GM12878 (cell line): ENCODE measurements at regions of chr20 and their contacts with region 1.

Region 1: GRCh38 chr20:45095753-45096371 is 5.1 kb downstream of the KCNS1 start:
- DNase-seq: peak; percentile 27
- ATAC-seq: peak; percentile 82
- H3K4me3 ChIP-seq: no peak overlapping the region
- H3K27ac ChIP-seq: no peak overlapping the region
- H3K4me1 ChIP-seq: no peaks in the 10 kb centered on the region
- H3K27me3 ChIP-seq: peaks cover under 1 to 7% of the 10 kb centered on the region in 2 experiments; a peak in 3 of 4 replicates
- CTCF ChIP-seq: peak; percentile 69 to 86 (median 84)
- EP300 ChIP-seq: no peak
- POLR2A ChIP-seq: no peak
- RAD21 ChIP-seq: peak; percentile 86

Region 2: DNA sequence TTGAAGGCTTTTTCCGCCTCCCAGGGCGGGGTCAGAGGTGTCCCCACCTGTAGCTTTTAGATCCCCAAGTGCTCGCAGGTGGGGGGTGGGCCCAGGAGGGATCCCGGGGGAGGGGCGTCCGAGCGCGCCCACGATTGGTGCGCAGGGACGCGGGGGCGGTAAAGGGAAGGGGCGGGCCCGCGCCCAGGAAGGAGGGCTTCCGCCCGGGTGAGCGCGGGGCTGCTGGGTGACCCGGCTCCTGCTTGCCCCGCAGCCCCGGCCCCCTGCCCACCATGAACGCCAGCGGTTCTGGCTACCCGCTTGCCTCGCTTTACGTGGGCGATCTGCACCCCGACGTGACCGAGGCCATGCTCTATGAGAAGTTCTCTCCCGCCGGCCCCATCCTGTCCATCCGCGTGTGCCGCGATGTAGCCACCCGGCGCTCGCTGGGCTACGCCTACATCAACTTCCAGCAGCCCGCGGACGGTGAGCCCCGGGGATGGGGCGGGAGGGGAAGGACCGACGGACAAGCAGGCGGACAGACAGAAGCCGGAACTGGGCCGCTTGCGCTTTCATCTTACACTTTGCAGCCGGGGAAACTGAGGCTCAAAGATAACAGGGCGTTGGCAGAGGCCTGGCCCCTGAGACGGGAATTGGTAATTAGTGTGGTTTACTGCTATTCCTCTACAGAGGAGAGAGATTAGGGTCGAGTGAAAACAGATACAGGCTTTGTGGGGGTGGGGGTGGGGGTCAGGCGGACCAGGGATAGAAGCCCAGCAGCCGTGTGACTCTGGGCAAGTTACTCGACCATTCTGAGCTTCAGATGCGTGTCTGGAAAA is 185.8 kb before region 1 on chr20 and contains the start of gene PABPC1L:
- CTCF ChIA-PET with region 1: interaction called, 30 read pairs
- POLR2A ChIA-PET with region 1: no interaction called
- RAD21 ChIA-PET with region 1: interaction called, 4 read pairs
- SMC1A ChIA-PET with region 1: interaction called, 18 read pairs
- in situ Hi-C with region 1: no loop called
- intact Hi-C with region 1: loop called (anchors 5 kb)
- DNase-seq: peak; percentile 13
- ATAC-seq: peak; percentile 98
- H3K4me3 ChIP-seq: peak within 1 kb of the TSS; percentile 91
- H3K27ac ChIP-seq: no peak within 1 kb of the TSS; the same call in 1 of the 2 replicates
- H3K4me1 ChIP-seq: peaks cover 3% of the 10 kb centered on the region
- H3K27me3 ChIP-seq: no peaks in the 10 kb centered on the region
- CTCF ChIP-seq: no peak
- EP300 ChIP-seq: no peak
- POLR2A ChIP-seq: peak; percentile 85
- RAD21 ChIP-seq: no peak
- polyA plus RNA-seq, gene PABPC1L: 6.1 to 7.1 TPM

Region 3: DNA sequence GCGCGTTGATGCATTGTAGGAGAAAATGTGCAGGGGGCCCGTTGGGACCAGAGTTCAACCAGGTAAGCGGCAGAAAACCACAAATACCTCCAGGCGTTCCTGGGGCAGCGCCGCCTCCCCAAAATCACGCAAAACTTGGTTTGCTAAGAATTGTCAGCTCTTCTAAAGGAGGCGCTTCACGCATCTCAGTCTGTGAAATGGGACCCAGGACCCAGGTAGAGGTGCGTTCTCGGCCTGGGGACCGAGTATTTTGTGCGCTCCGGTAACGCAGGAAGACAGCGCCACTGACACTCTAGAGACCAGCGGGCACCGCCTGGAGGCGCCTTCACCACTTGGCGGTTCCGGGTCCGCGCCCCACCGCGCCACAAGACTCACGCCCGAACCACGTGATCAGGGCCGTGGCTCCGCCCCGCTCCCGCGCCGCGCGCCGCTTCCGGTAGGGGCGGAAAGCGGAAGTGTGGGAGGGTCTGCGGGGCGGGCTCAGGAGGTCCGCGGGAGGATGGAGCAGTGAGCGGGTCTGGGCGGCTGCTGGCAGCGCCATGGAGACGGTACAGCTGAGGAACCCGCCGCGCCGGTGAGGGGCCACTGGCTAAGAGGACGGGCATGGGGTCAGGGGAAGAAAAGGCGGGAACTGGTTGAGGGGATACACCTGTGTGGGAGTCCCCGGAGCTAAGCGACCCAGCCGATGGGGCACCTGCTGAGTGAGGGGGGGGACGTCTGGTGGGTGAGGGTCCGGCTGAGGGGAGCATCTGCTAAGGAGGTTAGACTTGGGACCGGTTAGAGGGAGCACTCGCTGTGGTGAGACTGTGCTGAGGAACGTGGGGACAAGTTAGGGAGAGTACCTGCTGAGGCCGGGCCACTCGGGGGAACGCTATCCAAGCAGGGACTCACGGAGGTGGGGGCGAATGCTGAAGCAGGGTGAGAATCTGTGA is 129.6 kb before region 1 on chr20 and contains the start of gene STK4:
- CTCF ChIA-PET with region 1: interaction called, 11 read pairs
- POLR2A ChIA-PET with region 1: no interaction called
- RAD21 ChIA-PET with region 1: interaction called, 3 read pairs
- SMC1A ChIA-PET with region 1: interaction called, 3 read pairs
- in situ Hi-C with region 1: no loop called
- intact Hi-C with region 1: no loop called
- DNase-seq: peak; percentile 90
- ATAC-seq: peak; percentile 79
- H3K4me3 ChIP-seq: peak within 1 kb of the TSS; percentile 95
- H3K27ac ChIP-seq: peak within 1 kb of the TSS; percentile 95
- H3K4me1 ChIP-seq: peaks cover 13% of the 10 kb centered on the region
- H3K27me3 ChIP-seq: no peaks in the 10 kb centered on the region
- CTCF ChIP-seq: peak; percentile 50 to 74 (median 59)
- EP300 ChIP-seq: no peak; a peak in 1 of 4 replicates
- POLR2A ChIP-seq: peak; percentile 95
- RAD21 ChIP-seq: peak; percentile 45
- polyA plus RNA-seq, gene STK4: 24.0 to 51.4 TPM

Region 4: GRCh38 chr20:45036044-45036755 is 59.7 kb before region 1 on chr20:
- CTCF ChIA-PET with region 1: interaction called, 162 read pairs
- POLR2A ChIA-PET with region 1: no interaction called
- RAD21 ChIA-PET with region 1: interaction called, 85 read pairs
- SMC1A ChIA-PET with region 1: interaction called, 15 read pairs
- in situ Hi-C with region 1: no loop called
- intact Hi-C with region 1: no loop called
- DNase-seq: no peak
- ATAC-seq: no peak
- H3K4me3 ChIP-seq: no peak overlapping the region
- H3K27ac ChIP-seq: no peak overlapping the region
- H3K4me1 ChIP-seq: peaks cover 9% of the 10 kb centered on the region
- H3K27me3 ChIP-seq: no peaks in the 10 kb centered on the region
- CTCF ChIP-seq: no peak
- EP300 ChIP-seq: no peak
- POLR2A ChIP-seq: no peak
- RAD21 ChIP-seq: no peak

Region 5: GRCh38 chr20:45070932-45071632 is 24.8 kb before region 1 on chr20:
- CTCF ChIA-PET with region 1: interaction called, 16 read pairs
- POLR2A ChIA-PET with region 1: no interaction called
- RAD21 ChIA-PET with region 1: interaction called, 3 read pairs
- SMC1A ChIA-PET with region 1: interaction called, 4 read pairs
- in situ Hi-C with region 1: no loop called
- intact Hi-C with region 1: no loop called
- DNase-seq: no peak
- ATAC-seq: no peak
- H3K4me3 ChIP-seq: no peak overlapping the region
- H3K27ac ChIP-seq: no peak overlapping the region
- H3K4me1 ChIP-seq: no peaks in the 10 kb centered on the region
- H3K27me3 ChIP-seq: no peaks in the 10 kb centered on the region
- CTCF ChIP-seq: no peak
- EP300 ChIP-seq: no peak
- POLR2A ChIP-seq: no peak
- RAD21 ChIP-seq: no peak

Region 6: DNA sequence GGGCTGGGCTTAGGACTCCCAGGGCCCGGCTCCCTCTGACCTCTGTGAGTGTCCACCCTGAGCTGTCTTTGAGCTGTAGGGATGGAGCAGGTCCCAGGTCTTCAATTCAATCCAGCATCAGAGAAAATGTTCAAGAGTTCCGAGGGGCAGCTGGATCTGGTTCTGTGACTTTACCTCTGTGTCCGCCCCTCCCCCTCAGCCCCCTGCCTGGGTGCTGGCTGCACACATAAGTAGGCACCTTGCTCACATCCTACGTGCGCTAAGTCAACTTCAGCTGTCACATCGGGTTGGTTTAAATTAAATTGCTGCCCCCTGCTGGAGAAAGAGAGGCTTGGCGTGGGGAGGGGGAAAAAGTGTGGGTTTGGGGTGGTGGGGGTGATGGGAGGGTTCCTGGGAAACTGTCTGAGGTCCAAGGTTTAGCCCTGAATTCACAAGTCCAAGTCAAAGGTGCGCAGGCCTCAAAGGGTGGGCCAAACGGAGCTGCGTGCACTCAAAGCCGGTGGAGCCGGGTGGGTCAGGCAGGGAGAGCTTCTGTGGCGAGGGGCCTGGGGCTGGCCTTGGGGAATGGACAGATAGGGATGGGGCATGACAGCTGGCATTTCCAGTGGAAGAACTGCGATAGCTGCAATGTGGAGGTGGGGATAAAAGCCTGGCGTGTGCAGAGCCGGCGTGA is 16.1 kb after region 1 on chr20:
- CTCF ChIA-PET with region 1: interaction called, 44 read pairs
- POLR2A ChIA-PET with region 1: interaction called, 3 read pairs
- RAD21 ChIA-PET with region 1: interaction called, 8 read pairs
- SMC1A ChIA-PET with region 1: interaction called, 5 read pairs
- in situ Hi-C with region 1: no loop called
- intact Hi-C with region 1: no loop called
- DNase-seq: no peak
- ATAC-seq: peak; percentile 38; the same call in 2 of the 3 replicates
- H3K4me3 ChIP-seq: no peak overlapping the region
- H3K27ac ChIP-seq: no peak overlapping the region
- H3K4me1 ChIP-seq: no peaks in the 10 kb centered on the region
- H3K27me3 ChIP-seq: no peaks in the 10 kb centered on the region; a peak in 1 of 4 replicates
- CTCF ChIP-seq: peak; percentile 29 to 39 (median 36); a peak in 5 of 6 replicates
- EP300 ChIP-seq: no peak
- POLR2A ChIP-seq: no peak
- RAD21 ChIP-seq: peak; percentile 27

Region 7: DNA sequence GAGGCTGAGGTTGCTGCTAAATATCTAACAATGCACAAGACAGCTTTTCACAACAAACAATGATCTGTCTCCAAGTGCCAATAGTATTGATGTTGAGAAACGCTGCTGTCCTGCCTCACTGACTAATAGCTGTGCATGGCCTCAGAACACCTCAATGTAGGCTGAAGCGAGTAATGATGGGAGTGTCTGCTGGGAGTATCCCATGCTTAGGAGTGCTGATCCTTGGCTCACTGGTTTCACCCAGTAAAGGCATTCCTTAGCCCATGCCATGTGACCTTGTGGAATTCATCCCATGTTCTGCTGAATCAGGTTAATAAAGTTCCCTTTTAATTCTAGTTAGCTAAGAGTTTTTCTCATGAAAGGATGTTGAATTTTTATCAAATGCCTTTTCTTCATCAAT is 32.2 kb after region 1 on chr20:
- CTCF ChIA-PET with region 1: no interaction called
- POLR2A ChIA-PET with region 1: no interaction called
- RAD21 ChIA-PET with region 1: no interaction called
- SMC1A ChIA-PET with region 1: no interaction called
- in situ Hi-C with region 1: no loop called
- intact Hi-C with region 1: no loop called
- DNase-seq: no peak
- ATAC-seq: no peak
- H3K4me3 ChIP-seq: no peak overlapping the region
- H3K27ac ChIP-seq: no peak overlapping the region
- H3K4me1 ChIP-seq: no peaks in the 10 kb centered on the region
- H3K27me3 ChIP-seq: no peaks in the 10 kb centered on the region; a peak in 1 of 4 replicates
- CTCF ChIP-seq: no peak
- EP300 ChIP-seq: no peak
- POLR2A ChIP-seq: no peak
- RAD21 ChIP-seq: no peak

Region 8: GRCh38 chr20:45181639-45182038 is 85.8 kb after region 1 on chr20:
- CTCF ChIA-PET with region 1: no interaction called
- POLR2A ChIA-PET with region 1: no interaction called
- RAD21 ChIA-PET with region 1: no interaction called
- SMC1A ChIA-PET with region 1: no interaction called
- in situ Hi-C with region 1: no loop called
- intact Hi-C with region 1: no loop called
- DNase-seq: no peak
- ATAC-seq: no peak
- H3K4me3 ChIP-seq: no peak overlapping the region
- H3K27ac ChIP-seq: no peak overlapping the region
- H3K4me1 ChIP-seq: no peaks in the 10 kb centered on the region
- H3K27me3 ChIP-seq: peaks cover 0 to 1% of the 10 kb centered on the region in 2 experiments; a peak in 3 of 4 replicates
- CTCF ChIP-seq: no peak
- EP300 ChIP-seq: no peak
- POLR2A ChIP-seq: no peak
- RAD21 ChIP-seq: no peak